ENCODE measurements at regions of chr17 and their contacts with region 1.

Region 1: GRCh38 chr17:73231841-73232586 is 29.7 kb downstream of the CPSF4L start:
- DNase-seq: peak; percentile 97
- ATAC-seq: peak; percentile 92
- H3K4me3 Mint-ChIP-seq: peak overlapping the region; percentile 97
- H3K27ac Mint-ChIP-seq: peak overlapping the region; percentile 94
- H3K4me1 Mint-ChIP-seq: peaks cover 47% of the 10 kb centered on the region
- H3K27me3 Mint-ChIP-seq: no peaks in the 10 kb centered on the region

Region 2: DNA sequence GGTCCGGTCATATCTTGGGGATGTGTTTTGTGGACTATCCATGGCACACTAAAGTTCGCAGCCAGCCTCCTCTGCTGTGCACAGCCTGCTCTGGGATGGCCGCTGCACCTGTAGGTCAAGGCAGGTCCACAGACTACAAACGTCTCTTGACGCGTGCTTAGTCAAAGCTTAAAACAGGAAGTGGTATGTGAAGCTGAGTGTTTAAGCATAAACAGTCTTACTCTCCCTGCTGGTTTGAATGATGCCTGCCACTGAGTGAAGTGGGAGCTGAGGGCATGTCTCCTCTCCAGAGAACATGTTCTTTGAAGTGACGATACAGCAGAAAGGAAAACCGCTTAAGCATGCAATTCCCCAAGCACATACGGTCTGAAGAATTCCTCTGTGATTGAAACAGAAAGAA is 505.1 kb before region 1 on chr17:
- POLR2A ChIA-PET with region 1: interaction called, 12 read pairs
- DNase-seq: peak; percentile 58
- ATAC-seq: peak; percentile 93
- H3K4me3 Mint-ChIP-seq: peak overlapping the region; percentile 74
- H3K27ac Mint-ChIP-seq: peak overlapping the region; percentile 91
- H3K4me1 Mint-ChIP-seq: peaks cover 36% of the 10 kb centered on the region
- H3K27me3 Mint-ChIP-seq: peaks cover 3% of the 10 kb centered on the region

Region 3: DNA sequence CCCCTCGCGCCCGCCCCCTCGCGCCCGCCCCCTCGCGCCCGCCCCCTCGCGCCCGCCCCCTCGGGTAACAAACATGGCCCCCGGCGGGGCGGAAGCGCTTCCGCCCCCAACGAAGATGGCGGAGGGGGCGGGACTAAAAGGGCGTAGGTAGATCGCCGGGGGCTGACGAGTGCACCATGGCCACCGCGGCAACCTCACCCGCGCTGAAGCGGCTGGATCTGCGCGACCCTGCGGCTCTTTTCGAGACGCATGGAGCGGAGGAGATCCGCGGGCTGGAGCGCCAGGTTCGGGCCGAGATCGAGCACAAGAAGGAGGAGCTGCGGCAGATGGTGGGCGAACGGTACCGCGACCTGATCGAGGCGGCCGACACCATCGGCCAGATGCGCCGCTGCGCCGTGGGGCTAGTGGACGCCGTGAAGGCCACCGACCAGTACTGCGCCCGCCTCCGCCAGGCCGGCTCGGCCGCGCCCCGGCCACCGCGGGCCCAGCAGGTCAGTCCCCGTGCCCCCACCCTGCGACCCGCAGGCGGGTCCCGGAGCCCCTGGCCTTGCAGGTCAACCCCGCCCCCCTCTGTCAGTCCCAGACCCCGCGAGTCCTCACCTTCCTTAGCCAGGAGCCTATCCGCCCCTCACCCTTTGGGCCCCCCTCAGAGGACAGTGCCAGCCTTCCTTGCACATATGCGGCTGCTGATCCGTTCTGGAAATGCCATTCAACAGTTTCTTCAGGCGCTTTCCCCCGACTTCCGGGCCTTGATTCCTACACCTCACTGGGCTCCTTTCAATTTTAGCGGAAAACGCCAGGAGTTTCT is 38.9 kb before region 1 on chr17 and contains the start of gene COG1:
- POLR2A ChIA-PET with region 1: interaction called, 32 read pairs
- DNase-seq: peak; percentile 81
- ATAC-seq: peak; percentile 77
- H3K4me3 Mint-ChIP-seq: peak within 1 kb of the TSS; percentile 97
- H3K27ac Mint-ChIP-seq: peak within 1 kb of the TSS; percentile 96
- H3K4me1 Mint-ChIP-seq: peaks cover 17% of the 10 kb centered on the region
- H3K27me3 Mint-ChIP-seq: no peaks in the 10 kb centered on the region
- total RNA-seq, gene COG1: 51.8 to 53.7 TPM

Region 4: GRCh38 chr17:73203135-73203787 is 28.8 kb before region 1 on chr17:
- POLR2A ChIA-PET with region 1: interaction called, 21 read pairs
- DNase-seq: no peak
- ATAC-seq: peak; percentile 68
- H3K4me3 Mint-ChIP-seq: peak overlapping the region; percentile 49
- H3K27ac Mint-ChIP-seq: peak overlapping the region; percentile 78
- H3K4me1 Mint-ChIP-seq: peaks cover 33% of the 10 kb centered on the region
- H3K27me3 Mint-ChIP-seq: no peaks in the 10 kb centered on the region

Region 5: GRCh38 chr17:73278465-73279453 is 46.7 kb after region 1 on chr17:
- POLR2A ChIA-PET with region 1: no interaction called
- DNase-seq: no peak
- ATAC-seq: no peak
- H3K4me3 Mint-ChIP-seq: no peak overlapping the region
- H3K27ac Mint-ChIP-seq: no peak overlapping the region
- H3K4me1 Mint-ChIP-seq: no peaks in the 10 kb centered on the region
- H3K27me3 Mint-ChIP-seq: peaks cover 3% of the 10 kb centered on the region

Region 6: GRCh38 chr17:73342050-73342522 is 110.1 kb after region 1 on chr17:
- POLR2A ChIA-PET with region 1: no interaction called
- DNase-seq: no peak
- ATAC-seq: no peak
- H3K4me3 Mint-ChIP-seq: no peak overlapping the region
- H3K27ac Mint-ChIP-seq: no peak overlapping the region
- H3K4me1 Mint-ChIP-seq: no peaks in the 10 kb centered on the region
- H3K27me3 Mint-ChIP-seq: no peaks in the 10 kb centered on the region

Region 7: DNA sequence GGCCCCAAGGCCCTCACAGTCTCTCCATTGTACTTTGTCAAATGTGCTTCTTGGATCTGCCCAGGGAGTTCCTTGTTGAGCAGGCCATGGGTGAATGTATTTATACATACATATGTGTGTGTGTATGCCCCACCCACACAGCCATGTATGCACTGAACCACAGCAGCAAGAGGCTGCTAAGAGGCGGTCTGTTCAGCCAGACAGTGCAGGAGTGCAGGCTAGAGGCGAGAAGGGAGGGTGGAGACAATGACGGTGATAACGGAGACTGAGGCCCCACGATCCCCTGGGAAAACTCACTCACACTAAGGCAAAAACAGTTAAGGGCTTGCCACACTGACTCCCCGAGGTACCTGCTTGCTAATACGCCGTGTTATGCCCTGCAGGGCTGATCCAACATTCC is 230.8 kb after region 1 on chr17:
- POLR2A ChIA-PET with region 1: no interaction called
- DNase-seq: no peak
- ATAC-seq: no peak
- H3K4me3 Mint-ChIP-seq: no peak overlapping the region
- H3K27ac Mint-ChIP-seq: no peak overlapping the region
- H3K4me1 Mint-ChIP-seq: peaks cover 5% of the 10 kb centered on the region
- H3K27me3 Mint-ChIP-seq: no peaks in the 10 kb centered on the region

Measured in activated naive CD8-positive, alpha-beta T cell treated with anti-CD3 and anti-CD28 coated beads, Interleukin-2, amount 10 ng/mL, durations not matched to agents 7 days and 5 days (primary cell).